Tibial artery (tissue), 4 donors: ENCODE measurements at regions of chr9 and their contacts with region 1.

Region 1: GRCh38 chr9:130770679-130771442 is 64.2 kb upstream of the ABL1 start:
- DNase-seq: no peak
- H3K4me3 ChIP-seq: no peak overlapping the region
- H3K27ac ChIP-seq: no peak overlapping the region
- H3K4me1 ChIP-seq: peaks cover 0 to 15% (median 11%) of the 10 kb centered on the region in 4 donors
- H3K27me3 ChIP-seq: no peaks in the 10 kb centered on the region
- CTCF ChIP-seq: peak; percentile 68 to 84

Region 2: GRCh38 chr9:130689937-130690700 is 80.7 kb before region 1 on chr9:
- intact Hi-C with region 1: no loop called
- DNase-seq: peak; percentile 76 to 83
- H3K4me3 ChIP-seq: peak overlapping the region; percentile 38 to 46
- H3K27ac ChIP-seq: peak overlapping the region; percentile 56 to 71
- H3K4me1 ChIP-seq: peaks cover 0 to 26% (median 21%) of the 10 kb centered on the region in 4 donors
- H3K27me3 ChIP-seq: no peaks in the 10 kb centered on the region
- CTCF ChIP-seq: no peak

Region 3: DNA sequence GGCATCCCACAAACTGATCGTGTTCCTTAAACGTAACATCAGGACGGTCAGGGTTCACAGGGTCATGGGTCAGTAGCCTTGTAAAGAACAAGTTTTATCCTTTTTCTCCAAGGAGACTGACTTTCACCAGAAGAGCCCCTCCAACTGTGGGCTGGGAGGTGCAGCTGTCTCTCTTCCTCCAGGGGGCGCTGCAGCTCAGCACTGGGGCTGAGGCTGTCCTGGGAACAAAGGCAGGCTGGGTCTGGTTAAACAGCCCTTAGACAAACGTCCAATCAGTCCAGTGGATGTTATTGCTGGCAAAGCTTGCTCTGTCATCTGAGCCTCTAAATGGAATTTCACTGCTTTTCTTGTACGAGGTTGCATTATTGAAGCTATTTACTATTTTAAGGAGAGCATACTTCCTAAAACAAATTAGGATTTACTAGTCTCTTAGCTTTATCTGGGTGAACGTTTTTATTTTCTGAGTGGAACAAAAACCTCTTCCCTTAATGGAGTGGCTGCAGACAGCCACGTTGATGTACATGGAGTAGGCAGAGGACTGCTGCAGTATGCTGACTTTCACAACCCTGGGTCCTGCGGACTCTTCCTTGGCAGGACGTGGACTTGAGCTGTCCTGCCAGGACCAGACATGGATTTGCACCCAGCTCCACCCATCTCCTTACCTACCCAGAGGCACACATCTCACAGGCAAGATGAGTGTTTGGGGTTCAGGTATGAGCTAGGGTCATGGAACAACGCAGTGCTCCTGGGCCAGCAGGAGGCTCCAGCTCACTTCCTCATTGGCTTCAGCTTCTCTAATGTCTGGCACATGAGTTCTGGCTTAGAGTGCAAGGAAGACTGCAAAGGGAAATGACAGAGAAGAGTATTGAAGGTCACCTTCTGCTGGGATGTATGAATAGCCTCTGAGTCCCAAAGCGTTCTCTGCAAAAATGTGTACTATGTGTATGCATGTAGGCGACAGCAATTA is 69.5 kb before region 1 on chr9:
- intact Hi-C with region 1: loop called (anchors 5 kb)
- DNase-seq: peak; percentile 71 to 86
- H3K4me3 ChIP-seq: no peak overlapping the region
- H3K27ac ChIP-seq: peak overlapping the region; percentile 35 to 41
- H3K4me1 ChIP-seq: peaks cover 0 to 15% (median 7%) of the 10 kb centered on the region in 4 donors
- H3K27me3 ChIP-seq: no peaks in the 10 kb centered on the region
- CTCF ChIP-seq: peak; percentile 89 to 94

Region 4: GRCh38 chr9:130712564-130713285 is 58.1 kb before region 1 on chr9:
- intact Hi-C with region 1: loop called (anchors 5 kb)
- DNase-seq: peak; percentile 99
- H3K4me3 ChIP-seq: peak overlapping the region; percentile 96 to 98
- H3K27ac ChIP-seq: peak overlapping the region; percentile 98
- H3K4me1 ChIP-seq: peaks cover 0 to 37% (median 22%) of the 10 kb centered on the region in 4 donors
- H3K27me3 ChIP-seq: no peaks in the 10 kb centered on the region
- CTCF ChIP-seq: peak in 1 of 2 experiments; percentile 16

Region 5: GRCh38 chr9:130741831-130742449 is 28.9 kb before region 1 on chr9:
- intact Hi-C with region 1: no loop called
- DNase-seq: no peak
- H3K4me3 ChIP-seq: no peak overlapping the region
- H3K27ac ChIP-seq: no peak overlapping the region
- H3K4me1 ChIP-seq: no peaks in the 10 kb centered on the region
- H3K27me3 ChIP-seq: no peaks in the 10 kb centered on the region
- CTCF ChIP-seq: no peak

Region 6: DNA sequence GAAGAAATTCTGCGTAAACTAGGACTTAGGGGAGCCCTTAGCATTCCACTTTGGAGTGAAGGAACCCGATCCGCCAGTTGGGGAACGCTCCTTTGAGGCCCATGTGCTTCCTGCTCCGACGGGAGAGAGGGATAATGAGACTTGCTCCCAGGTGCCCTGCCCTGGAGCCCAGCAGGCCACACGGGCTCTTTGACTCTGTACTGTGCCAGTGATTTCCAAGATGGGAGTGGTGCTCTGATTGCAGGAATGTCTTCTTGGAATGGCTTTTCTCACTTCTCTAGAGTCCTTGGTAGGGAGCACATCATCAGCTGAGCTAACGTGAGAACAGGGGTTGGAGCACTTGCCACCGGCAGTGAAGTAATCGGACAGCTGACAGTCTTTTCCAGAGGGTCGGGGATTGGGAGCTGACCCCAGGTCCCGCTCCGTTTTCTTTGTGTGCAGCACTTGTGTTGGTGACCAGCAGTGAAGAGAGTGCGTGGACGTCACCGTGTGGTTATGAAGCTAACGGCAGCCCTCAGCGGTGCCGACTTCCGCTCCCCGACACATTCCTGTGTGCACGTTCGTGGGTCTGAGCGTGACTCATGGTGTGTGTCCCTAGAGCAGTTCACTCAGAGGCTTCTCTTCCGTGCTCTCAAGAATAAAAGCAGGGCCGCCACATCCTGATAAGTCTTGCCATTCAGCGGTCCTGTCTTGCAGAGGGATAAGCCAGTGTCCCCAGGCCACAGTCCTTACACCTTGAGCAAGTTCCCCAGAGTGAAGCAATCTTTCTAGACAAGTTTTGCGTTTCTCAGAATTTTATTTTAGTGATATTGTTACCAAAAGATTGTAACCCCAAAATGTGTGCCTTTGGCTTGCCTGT is 89.8 kb after region 1 on chr9:
- intact Hi-C with region 1: loop called (anchors 2 kb)
- DNase-seq: peak; percentile 91 to 96
- H3K4me3 ChIP-seq: no peak overlapping the region
- H3K27ac ChIP-seq: peak overlapping the region; percentile 80
- H3K4me1 ChIP-seq: peaks cover 0 to 68% (median 49%) of the 10 kb centered on the region in 4 donors
- H3K27me3 ChIP-seq: no peaks in the 10 kb centered on the region
- CTCF ChIP-seq: peak; percentile 61 to 69

Region 7: DNA sequence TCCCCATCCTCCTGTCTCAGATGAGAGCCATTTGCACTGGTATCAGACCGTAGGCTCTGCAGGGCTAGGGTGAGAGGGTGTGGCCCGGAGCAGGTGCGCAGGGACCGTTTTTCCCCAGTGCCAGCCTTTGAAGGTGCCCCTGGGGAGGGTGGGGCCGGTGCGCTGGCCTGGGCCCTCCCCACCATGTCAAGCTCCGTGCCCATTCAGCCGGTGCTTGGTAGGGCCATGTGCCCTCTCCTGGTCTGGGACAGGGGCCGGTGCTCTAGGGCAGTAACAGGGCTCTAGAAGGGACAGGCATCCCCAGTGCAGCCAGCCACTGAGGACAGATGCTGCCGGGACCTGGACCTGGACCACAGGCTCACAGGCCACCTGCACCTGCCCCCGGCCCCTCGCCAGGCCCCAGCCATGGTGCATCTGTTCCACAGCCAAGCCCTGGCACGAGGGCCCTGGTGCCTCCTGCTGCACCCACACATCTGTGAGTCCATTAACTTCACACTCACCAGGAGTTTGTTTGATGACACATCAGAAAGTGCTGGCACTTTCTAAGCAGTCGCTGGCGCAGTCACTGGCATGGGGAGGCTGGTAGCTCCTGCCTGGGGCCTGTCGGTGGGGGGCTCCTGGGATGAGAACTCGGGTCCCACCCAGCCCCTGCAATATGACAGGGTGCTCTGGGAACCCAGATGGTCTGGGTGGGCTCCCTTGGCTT is 130.8 kb after region 1 on chr9:
- intact Hi-C with region 1: no loop called
- DNase-seq: no peak
- H3K4me3 ChIP-seq: no peak overlapping the region
- H3K27ac ChIP-seq: no peak overlapping the region
- H3K4me1 ChIP-seq: peaks cover 0 to 6% (median 0%) of the 10 kb centered on the region in 4 donors
- H3K27me3 ChIP-seq: peaks cover 0 to 83% of the 10 kb centered on the region in 2 donors
- CTCF ChIP-seq: no peak

Region 8: DNA sequence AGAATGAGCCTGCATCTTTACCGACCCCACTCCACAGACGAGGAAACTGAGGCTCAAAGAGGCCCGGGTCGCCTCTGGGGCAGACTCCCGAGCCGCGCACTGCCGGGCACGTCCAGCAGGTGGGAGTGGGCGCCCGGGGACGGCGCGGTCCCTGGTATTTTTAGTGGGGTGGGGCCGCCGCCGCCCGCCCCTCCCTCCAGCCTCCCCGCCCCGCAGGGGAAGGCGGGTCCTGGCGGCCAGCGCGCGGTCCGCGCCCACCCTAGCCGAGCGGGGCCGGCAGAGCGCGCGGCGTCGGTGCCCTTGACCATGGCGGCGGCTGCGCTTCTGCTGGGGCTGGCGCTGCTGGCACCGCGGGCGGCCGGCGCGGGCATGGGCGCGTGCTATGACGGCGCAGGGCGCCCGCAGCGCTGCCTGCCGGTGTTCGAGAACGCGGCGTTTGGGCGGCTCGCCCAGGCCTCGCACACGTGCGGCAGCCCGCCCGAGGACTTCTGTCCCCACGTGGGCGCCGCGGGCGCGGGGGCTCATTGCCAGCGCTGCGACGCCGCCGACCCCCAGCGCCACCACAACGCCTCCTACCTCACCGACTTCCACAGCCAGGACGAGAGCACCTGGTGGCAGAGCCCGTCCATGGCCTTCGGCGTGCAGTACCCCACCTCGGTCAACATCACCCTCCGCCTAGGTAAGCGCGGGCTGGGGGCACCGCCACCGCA is 238.2 kb after region 1 on chr9 and contains the start of gene LAMC3:
- intact Hi-C with region 1: no loop called
- DNase-seq: no peak
- H3K4me3 ChIP-seq: peak within 1 kb of the TSS; percentile 21 to 37
- H3K27ac ChIP-seq: no peak within 1 kb of the TSS
- H3K4me1 ChIP-seq: peaks cover 0 to 11% (median 8%) of the 10 kb centered on the region in 4 donors
- H3K27me3 ChIP-seq: peaks cover 0 to 56% of the 10 kb centered on the region in 2 donors
- CTCF ChIP-seq: peak; percentile 29 to 47